Posterior vena cava (tissue), 2 donors: ENCODE measurements at regions of chrX and their contacts with region 1.

Region 1: GRCh38 chrX:9462456-9462855 is 2.4 kb upstream of the TBL1X start:
- DNase-seq: no peak

Region 2: GRCh38 chrX:9341291-9342201 is 120.9 kb before region 1 on chrX:
- intact Hi-C with region 1: loop called in 1 of 2 experiments (anchors 2 kb)
- DNase-seq: peak; percentile 94

Region 3: DNA sequence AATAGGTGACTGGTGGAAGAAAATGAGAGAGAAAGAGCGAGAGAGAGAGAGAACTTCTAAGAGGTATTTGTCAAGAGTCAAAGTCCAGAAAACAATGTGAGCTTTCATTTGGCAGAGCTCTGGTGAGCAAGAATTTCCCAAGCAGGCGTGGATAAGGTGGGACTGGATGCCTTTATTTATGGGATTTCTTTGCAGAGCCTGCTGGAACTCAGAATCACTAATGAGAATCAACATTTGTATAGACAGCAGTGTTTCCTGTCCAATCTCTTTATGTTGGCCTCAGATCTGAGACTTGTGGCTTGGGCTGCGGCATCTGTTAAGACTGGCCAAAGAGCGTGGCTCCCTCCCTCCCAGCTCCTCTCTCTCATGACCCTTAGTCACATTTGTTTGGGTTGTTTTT is 65.5 kb before region 1 on chrX:
- intact Hi-C with region 1: no loop called
- DNase-seq: no peak